ENCODE measurements at regions of chr7 and their contacts with region 1.

Region 1: DNA sequence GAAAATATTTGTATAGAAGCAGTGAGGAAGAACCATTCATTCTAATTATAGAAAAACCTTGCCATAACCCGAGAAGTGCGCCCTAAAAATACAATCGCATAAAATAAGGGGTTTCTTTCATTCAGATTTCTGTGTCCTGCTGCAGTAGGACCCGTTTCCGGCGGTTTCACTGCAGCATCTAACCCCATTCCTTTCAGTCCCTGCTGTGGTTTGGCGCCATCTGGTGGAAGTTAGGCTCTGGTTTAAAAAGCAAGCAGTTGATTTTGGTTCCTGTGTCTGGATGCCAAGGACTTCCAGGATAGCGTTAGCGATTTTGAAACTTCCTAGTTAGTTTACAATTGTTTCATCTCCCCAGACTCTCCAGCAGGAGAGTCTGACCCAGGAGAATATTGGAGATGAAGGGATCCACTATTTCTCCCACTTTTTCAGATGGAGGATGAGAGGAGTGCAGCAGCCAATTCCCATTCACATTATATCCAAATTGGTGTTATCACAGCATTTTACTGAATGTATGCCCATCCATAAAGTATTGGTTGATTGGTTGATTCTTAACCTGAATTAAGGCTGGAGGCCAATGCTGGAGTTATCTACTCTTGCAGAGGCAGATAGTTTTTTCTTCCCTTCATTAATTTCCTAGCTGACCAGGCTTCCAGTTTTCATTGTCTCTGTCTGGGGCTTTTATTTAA is 128.8 kb upstream of the CACNA2D1 start:
- DNase-seq: peak; percentile 56 to 80
- H3K4me3 ChIP-seq: no peak overlapping the region
- H3K27ac ChIP-seq: no peak overlapping the region
- H3K4me1 ChIP-seq: no peaks in the 10 kb centered on the region
- H3K27me3 ChIP-seq: no peaks in the 10 kb centered on the region
- CTCF ChIP-seq: peak; percentile 92

Region 2: DNA sequence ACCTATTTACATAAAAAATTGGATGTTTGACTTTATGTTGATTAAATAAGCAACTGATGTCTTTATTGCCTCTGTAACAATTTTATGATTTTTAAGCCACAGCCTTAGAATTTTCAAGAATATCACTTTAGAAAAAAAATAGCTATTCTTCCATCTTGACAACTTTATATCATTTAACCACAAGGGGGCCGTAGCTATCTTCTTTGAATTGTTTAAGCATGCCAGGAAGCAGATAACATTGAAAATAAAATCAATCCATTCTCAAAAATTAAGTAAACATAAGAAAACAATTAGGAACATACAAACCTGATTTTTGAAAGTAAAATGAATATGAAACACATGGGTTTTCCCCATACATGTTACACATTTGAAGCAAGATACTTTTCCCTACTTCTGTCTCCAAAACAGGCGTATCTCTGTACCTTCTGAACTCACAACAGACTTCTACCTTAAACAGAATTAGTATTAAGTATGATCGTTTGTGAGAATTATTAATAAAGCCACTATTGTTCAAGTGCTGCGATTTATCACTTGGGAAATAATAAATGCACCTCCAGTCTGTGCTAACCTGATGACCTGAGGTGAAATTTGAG is 337.8 kb before region 1 on chr7:
- CTCF ChIA-PET with region 1: no interaction called
- POLR2A ChIA-PET with region 1: no interaction called
- intact Hi-C with region 1: loop called (anchors 1 kb)
- DNase-seq: no peak
- H3K4me3 ChIP-seq: no peak overlapping the region
- H3K27ac ChIP-seq: no peak overlapping the region
- H3K4me1 ChIP-seq: no peaks in the 10 kb centered on the region
- H3K27me3 ChIP-seq: no peaks in the 10 kb centered on the region
- CTCF ChIP-seq: peak; percentile 78

Region 3: GRCh38 chr7:82443547-82444219 is 128.7 kb before region 1 on chr7 and contains the start of gene CACNA2D1:
- CTCF ChIA-PET with region 1: no interaction called
- POLR2A ChIA-PET with region 1: no interaction called
- intact Hi-C with region 1: loop called (anchors 1 kb)
- DNase-seq: peak in 1 of 2 experiments; percentile 66
- H3K4me3 ChIP-seq: peak within 1 kb of the TSS; percentile 95
- H3K27ac ChIP-seq: no peak within 1 kb of the TSS
- H3K4me1 ChIP-seq: peaks cover 12% of the 10 kb centered on the region; the same call in 1 of the 2 replicates
- H3K27me3 ChIP-seq: no peaks in the 10 kb centered on the region
- CTCF ChIP-seq: no peak
- total RNA-seq, gene CACNA2D1: 2.5 and 3.2 TPM in 2 replicates

Region 4: DNA sequence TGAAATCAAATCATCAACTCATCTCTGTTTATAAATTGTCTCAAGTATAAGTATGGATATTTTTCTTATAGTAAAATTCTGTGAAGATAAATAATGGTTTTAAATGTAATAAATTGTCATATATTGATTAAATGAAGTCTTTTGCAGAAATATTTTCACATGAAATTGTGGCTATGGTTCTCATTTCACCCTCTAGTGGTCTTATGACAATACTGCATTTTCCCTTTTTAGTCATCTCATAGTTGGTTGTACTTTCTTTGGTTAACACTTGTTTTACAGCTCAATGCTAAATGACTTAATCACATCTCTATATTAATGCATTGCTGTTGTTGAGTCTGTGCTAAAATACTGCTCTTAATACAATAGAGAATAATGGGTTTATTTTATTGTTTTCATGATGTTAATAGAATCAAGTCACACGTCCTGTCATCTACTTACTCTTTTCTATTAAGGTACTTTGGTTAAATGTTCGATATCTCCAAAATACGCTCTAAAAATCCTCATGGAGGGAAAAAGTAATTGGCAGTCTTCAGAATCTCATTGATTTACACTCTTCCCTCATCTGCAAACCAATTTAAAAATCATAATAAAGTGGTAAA is 90.7 kb before region 1 on chr7:
- CTCF ChIA-PET with region 1: no interaction called
- POLR2A ChIA-PET with region 1: no interaction called
- intact Hi-C with region 1: loop called (anchors 10 kb)
- DNase-seq: no peak
- H3K4me3 ChIP-seq: no peak overlapping the region
- H3K27ac ChIP-seq: no peak overlapping the region
- H3K4me1 ChIP-seq: no peaks in the 10 kb centered on the region
- H3K27me3 ChIP-seq: no peaks in the 10 kb centered on the region
- CTCF ChIP-seq: peak; percentile 88

Region 5: DNA sequence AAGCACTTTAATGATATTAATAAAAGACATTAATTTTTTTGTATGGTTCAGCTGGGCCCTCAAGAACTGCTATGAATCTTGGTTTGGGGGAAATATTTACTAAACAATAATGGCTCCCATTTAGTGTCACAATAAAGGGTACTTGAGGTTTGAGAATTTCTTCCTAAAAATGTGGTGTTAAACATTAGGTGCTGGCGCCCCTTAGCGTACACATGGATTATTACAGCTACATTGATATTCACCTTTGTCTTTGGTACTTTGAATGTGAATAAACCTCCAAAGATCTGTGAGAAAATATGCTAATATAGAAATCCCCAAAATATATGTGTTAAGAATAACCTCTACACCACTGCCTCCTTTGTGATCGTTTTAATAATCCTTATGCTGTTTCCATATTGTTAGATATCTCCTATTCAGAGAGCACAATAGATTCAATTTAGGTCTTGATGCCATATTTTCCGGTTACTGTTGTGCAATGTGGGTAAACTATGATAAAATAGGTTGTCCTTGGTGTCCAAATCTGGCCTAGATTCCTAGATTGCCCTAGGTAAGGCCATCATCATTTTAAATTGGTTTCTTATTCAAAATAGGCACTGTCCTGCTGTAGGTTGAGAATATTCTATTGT is 33.0 kb after region 1 on chr7:
- CTCF ChIA-PET with region 1: no interaction called
- POLR2A ChIA-PET with region 1: no interaction called
- intact Hi-C with region 1: loop called (anchors 1 kb)
- DNase-seq: peak in 1 of 2 experiments; percentile 15
- H3K4me3 ChIP-seq: no peak overlapping the region
- H3K27ac ChIP-seq: no peak overlapping the region
- H3K4me1 ChIP-seq: no peaks in the 10 kb centered on the region
- H3K27me3 ChIP-seq: no peaks in the 10 kb centered on the region
- CTCF ChIP-seq: peak; percentile 87

Region 6: DNA sequence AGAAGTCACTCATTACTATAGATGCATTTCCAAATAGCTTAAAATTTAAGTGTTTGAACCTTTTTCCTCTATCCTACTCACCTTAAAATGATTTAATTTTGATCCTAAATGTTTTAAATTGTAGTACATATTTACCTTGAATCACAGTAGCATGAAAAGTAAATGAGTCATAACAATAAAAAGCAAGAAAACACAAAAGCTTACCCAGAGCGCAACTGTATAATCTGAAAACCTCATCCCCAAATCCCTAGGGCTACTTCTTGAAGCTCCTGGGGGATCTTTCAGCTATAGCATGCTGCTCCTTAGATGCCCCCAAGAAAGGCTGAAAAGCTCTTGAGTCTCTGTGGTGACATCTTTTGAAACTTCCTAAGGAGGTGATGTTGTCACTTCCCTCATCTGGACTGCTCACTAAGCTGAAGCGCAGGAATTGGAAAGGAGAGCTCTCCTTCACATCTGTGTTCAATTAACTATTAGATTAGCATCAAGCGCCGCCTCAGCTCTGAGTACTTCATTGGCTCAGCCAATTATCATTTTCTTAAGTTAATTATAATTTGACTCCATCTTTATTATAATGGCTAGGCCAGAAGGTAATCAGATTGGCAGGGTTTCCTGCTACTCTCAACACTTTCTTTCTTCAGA is 1016.4 kb after region 1 on chr7:
- CTCF ChIA-PET with region 1: no interaction called
- POLR2A ChIA-PET with region 1: no interaction called
- intact Hi-C with region 1: no loop called
- DNase-seq: no peak
- H3K4me3 ChIP-seq: no peak overlapping the region
- H3K27ac ChIP-seq: no peak overlapping the region
- H3K4me1 ChIP-seq: no peaks in the 10 kb centered on the region
- H3K27me3 ChIP-seq: no peaks in the 10 kb centered on the region
- CTCF ChIP-seq: no peak

Measured in PC-9 (cell line).